Activated CD4-positive, alpha-beta T cell treated with anti-CD3 and anti-CD28 coated beads for 36 hours (primary cell): ENCODE measurements at regions of chr2 and their contacts with region 1.

Region 1: GRCh38 chr2:37376421-37377186 is 32.2 kb downstream of the QPCT start:
- DNase-seq: peak; percentile 66
- ATAC-seq: peak; percentile 83
- H3K4me3 Mint-ChIP-seq: peak overlapping the region; percentile 44
- H3K27ac Mint-ChIP-seq: peak overlapping the region; percentile 83
- H3K4me1 Mint-ChIP-seq: peaks cover 34% of the 10 kb centered on the region
- H3K27me3 Mint-ChIP-seq: peaks cover 47% of the 10 kb centered on the region

Region 2: DNA sequence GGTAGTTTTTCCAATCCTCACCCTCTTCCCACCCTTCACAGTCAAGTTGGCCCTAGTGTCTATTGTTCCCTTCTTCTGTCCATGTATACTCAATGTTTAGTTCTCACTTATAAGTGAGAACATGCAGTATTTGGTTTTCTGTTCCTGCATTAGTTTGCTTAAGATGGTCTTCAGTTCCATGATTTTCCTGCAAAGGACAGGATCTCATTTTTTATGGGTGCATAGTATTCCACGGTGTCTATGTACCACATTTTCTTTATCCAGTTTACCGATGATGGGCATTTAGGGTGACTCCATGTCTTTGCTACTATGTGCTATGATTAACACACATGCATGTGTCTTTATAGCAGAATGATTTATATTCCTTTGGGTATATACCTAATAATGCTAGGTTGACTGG is 514.7 kb before region 1 on chr2:
- CTCF ChIA-PET with region 1: no interaction called
- POLR2A ChIA-PET with region 1: no interaction called
- intact Hi-C with region 1: loop called in 1 of 2 experiments (anchors 5 kb)
- DNase-seq: no peak
- ATAC-seq: no peak
- H3K4me3 Mint-ChIP-seq: no peak overlapping the region
- H3K27ac Mint-ChIP-seq: no peak overlapping the region
- H3K4me1 Mint-ChIP-seq: peaks cover 21% of the 10 kb centered on the region
- H3K27me3 Mint-ChIP-seq: no peaks in the 10 kb centered on the region

Region 3: GRCh38 chr2:37344453-37345361 is 31.9 kb before region 1 on chr2 and contains the start of gene QPCT:
- CTCF ChIA-PET with region 1: no interaction called
- POLR2A ChIA-PET with region 1: interaction called, 3 read pairs
- intact Hi-C with region 1: loop called in 1 of 2 experiments (anchors 2 kb)
- DNase-seq: peak; percentile 64
- ATAC-seq: peak; percentile 80
- H3K4me3 Mint-ChIP-seq: peak within 1 kb of the TSS; percentile 66
- H3K27ac Mint-ChIP-seq: no peak within 1 kb of the TSS
- H3K4me1 Mint-ChIP-seq: peaks cover 15% of the 10 kb centered on the region
- H3K27me3 Mint-ChIP-seq: peaks cover 45% of the 10 kb centered on the region
- total RNA-seq, gene QPCT: 0.51 to 0.64 TPM

Region 4: DNA sequence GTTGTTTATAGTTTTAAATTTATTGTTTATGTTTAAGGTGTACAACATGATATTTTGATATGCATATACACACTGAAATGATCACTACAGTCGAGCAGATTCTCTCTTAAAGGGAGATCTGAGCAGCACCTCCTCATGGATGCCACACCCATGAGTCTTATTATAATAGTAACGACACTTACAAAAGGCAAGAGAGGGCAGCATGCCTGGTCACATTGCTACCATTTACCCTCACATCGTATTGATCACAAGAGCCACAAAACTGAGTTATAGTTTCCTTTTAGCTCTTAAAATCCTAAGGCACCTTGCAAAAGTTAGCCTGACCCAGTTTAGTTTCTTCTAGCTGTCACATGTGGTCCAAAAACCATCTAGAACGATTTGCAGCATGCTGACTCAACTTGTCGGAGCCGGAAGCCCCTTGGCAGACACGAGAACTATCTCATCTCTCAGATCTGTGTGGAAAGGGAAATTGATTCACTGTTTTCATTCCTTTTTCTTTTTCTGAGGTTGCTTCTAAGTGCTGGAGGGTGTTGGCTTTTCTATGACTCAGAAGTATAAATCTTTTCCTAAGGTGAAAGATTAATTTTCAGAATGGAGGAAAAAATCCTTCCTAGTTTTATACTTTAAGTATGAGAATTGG is 209.5 kb after region 1 on chr2:
- CTCF ChIA-PET with region 1: no interaction called
- POLR2A ChIA-PET with region 1: no interaction called
- intact Hi-C with region 1: loop called in 1 of 2 experiments (anchors 1 kb)
- DNase-seq: peak; percentile 83
- ATAC-seq: peak; percentile 85
- H3K4me3 Mint-ChIP-seq: peak overlapping the region; percentile 22
- H3K27ac Mint-ChIP-seq: peak overlapping the region; percentile 52
- H3K4me1 Mint-ChIP-seq: peaks cover 90% of the 10 kb centered on the region
- H3K27me3 Mint-ChIP-seq: no peaks in the 10 kb centered on the region

Region 5: GRCh38 chr2:37616677-37617005 is 240.0 kb after region 1 on chr2:
- CTCF ChIA-PET with region 1: no interaction called
- POLR2A ChIA-PET with region 1: no interaction called
- intact Hi-C with region 1: no loop called
- DNase-seq: no peak
- ATAC-seq: peak; percentile 58
- H3K4me3 Mint-ChIP-seq: no peak overlapping the region
- H3K27ac Mint-ChIP-seq: peak overlapping the region; percentile 86
- H3K4me1 Mint-ChIP-seq: peaks cover 59% of the 10 kb centered on the region
- H3K27me3 Mint-ChIP-seq: no peaks in the 10 kb centered on the region

Region 6: DNA sequence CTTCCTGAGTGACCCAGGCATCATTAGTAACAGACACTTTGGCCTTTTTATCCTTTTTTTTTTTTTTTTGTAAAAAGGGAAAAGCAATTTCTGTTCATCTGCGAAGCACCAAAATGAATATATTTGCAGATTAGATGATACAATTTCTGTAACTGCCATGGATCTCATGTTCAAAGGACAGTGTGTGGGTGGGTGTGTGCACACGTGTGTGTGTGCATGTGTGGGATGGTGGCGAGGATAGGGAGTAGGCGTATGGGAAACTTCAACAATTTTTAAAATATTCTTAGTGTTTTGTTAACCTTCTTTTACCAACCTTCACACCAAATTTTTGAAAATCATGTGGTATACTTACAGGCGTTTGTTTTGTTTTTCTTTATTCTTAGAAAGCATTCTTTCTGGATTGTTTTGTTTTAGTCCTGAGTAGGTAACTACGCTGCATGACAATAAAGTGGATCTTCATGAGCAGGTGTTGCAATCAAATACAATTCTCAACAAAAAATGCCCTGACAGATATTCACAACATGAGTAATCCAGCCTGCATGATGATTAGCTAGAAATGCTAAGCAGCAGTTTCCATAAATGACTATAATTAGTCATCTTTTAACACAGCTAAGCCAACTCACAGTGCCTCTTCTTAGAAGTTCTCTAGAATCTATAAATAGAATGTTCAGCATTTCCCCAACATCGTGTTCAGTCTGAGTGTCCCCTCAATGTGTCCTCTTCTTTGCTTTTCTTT is 495.0 kb after region 1 on chr2:
- CTCF ChIA-PET with region 1: no interaction called
- POLR2A ChIA-PET with region 1: no interaction called
- intact Hi-C with region 1: loop called (anchors 1 kb)
- DNase-seq: no peak
- ATAC-seq: peak; percentile 92
- H3K4me3 Mint-ChIP-seq: peak overlapping the region; percentile 49
- H3K27ac Mint-ChIP-seq: peak overlapping the region; percentile 93
- H3K4me1 Mint-ChIP-seq: peaks cover 37% of the 10 kb centered on the region
- H3K27me3 Mint-ChIP-seq: peaks cover 7% of the 10 kb centered on the region